ENCODE measurements at regions of chr3 and their contacts with region 1.

Region 1: DNA sequence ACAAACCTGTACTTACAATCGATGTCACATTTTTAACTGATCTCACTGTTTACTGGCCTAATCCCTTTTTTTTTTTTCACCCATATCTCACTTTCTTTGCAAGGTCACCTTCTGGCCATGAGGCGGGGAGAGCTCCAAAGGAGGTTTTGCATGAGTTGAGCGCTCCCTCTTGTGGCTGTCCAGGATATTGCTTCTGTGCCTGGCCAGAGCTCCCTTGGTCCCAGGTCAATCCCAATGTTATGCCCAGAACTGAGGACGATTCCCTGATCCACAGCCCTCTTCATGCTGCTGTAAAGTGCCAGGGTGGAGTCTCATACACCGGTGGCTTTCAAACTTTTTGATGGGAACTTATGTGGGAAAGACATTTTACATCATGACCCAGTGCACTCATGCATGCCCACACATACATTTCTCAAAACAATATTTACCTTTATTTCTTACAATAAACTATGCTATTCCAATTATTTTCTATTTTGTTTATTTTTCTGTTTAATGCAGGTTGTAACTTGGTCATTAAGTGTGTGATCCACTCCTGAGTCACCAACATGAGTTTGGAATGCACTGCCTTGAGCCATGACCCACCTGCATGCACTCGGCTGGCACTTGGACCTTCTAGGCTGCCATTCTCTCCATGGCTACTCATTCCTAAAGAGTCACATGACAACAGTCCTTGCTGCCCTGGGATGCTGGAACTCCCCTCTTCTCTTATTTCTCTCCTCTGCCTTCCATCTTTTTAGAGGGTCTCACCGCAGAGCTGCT is 9.6 kb upstream of the SST start:
- DNase-seq: peak; percentile 71 to 79
- H3K4me3 ChIP-seq: no peak overlapping the region
- H3K27ac ChIP-seq: no peak overlapping the region
- H3K4me1 ChIP-seq: no peaks in the 10 kb centered on the region
- H3K27me3 ChIP-seq: peaks cover 47% of the 10 kb centered on the region
- CTCF ChIP-seq: peak; percentile 96

Region 2: DNA sequence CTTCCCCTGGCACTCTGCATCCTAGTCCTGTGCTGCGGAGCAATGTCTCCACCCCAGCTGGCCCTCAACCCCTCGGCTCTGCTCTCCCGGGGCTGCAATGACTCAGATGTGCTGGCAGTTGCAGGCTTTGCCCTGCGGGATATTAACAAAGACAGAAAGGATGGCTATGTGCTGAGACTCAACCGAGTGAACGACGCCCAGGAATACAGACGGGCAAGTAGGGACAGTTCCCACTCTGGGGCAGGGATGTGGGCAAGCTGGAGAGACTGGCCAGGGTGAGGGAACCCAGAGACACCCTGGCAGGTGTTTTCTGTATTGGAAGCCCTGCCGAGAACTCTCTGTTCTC is 1039.4 kb before region 1 on chr3:
- CTCF ChIA-PET with region 1: no interaction called
- POLR2A ChIA-PET with region 1: no interaction called
- intact Hi-C with region 1: no loop called
- DNase-seq: peak; percentile 67 to 70
- H3K4me3 ChIP-seq: no peak overlapping the region
- H3K27ac ChIP-seq: no peak overlapping the region
- H3K4me1 ChIP-seq: peaks cover 26% of the 10 kb centered on the region
- H3K27me3 ChIP-seq: no peaks in the 10 kb centered on the region
- CTCF ChIP-seq: no peak

Region 3: DNA sequence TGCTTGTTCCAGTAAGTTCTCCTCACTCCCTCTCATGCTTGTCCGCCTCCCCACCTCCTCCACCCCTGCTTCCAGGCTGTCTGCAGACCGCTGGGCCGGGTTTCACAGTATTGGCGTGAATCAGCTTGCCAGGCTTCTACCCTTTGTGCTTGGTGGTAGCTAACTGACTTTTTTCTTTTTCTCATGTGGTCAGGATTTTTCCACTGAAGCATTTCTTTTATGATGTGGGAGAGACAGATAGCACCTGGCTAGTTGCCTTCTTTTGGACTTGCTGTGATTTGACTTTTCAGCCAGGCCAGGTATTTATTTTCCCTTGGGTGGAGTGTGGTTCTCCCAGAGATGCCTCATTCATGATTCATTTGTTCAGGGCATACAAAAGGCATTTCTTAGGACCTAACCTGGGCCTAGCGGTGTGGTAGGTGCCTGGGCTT is 688.9 kb before region 1 on chr3:
- CTCF ChIA-PET with region 1: interaction called, 10 read pairs
- POLR2A ChIA-PET with region 1: no interaction called
- intact Hi-C with region 1: no loop called
- DNase-seq: peak; percentile 79 to 95
- H3K4me3 ChIP-seq: no peak overlapping the region
- H3K27ac ChIP-seq: peak overlapping the region; percentile 73
- H3K4me1 ChIP-seq: peaks cover 31% of the 10 kb centered on the region
- H3K27me3 ChIP-seq: no peaks in the 10 kb centered on the region
- CTCF ChIP-seq: no peak

Region 4: GRCh38 chr3:187139126-187139894 is 540.5 kb before region 1 on chr3 and contains the start of gene RPL39L:
- CTCF ChIA-PET with region 1: interaction called, 10 read pairs
- POLR2A ChIA-PET with region 1: no interaction called
- intact Hi-C with region 1: no loop called
- DNase-seq: peak; percentile 83 to 92
- H3K4me3 ChIP-seq: peak within 1 kb of the TSS; percentile 73
- H3K27ac ChIP-seq: peak within 1 kb of the TSS; percentile 57
- H3K4me1 ChIP-seq: peaks cover 22% of the 10 kb centered on the region
- H3K27me3 ChIP-seq: no peaks in the 10 kb centered on the region
- CTCF ChIP-seq: peak; percentile 99
- total RNA-seq, gene RPL39L: 73.9 and 81.3 TPM in 2 replicates

Region 5: DNA sequence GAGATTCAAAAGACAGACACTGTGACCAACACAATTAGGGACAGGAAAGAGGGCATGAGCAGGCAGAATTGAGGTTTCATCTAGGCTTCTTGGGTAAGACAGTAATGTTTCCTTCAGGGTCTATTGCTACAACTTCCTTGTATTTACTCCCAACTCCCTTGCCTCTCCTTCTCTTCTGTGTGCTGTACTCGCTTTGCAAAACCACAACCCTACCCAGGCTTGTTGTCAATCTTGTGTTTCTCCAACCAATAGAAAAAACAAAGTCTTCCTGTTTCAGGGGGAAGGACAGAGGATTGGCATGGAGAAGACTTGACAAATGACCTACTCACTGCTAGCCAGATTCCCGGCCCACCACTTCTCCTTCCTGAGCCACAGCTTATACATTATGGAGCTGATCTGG is 352.0 kb before region 1 on chr3:
- CTCF ChIA-PET with region 1: interaction called, 3 read pairs
- POLR2A ChIA-PET with region 1: interaction called, 13 read pairs
- intact Hi-C with region 1: no loop called
- DNase-seq: no peak
- H3K4me3 ChIP-seq: no peak overlapping the region
- H3K27ac ChIP-seq: no peak overlapping the region
- H3K4me1 ChIP-seq: no peaks in the 10 kb centered on the region
- H3K27me3 ChIP-seq: peaks cover 79% of the 10 kb centered on the region
- CTCF ChIP-seq: no peak

Region 6: DNA sequence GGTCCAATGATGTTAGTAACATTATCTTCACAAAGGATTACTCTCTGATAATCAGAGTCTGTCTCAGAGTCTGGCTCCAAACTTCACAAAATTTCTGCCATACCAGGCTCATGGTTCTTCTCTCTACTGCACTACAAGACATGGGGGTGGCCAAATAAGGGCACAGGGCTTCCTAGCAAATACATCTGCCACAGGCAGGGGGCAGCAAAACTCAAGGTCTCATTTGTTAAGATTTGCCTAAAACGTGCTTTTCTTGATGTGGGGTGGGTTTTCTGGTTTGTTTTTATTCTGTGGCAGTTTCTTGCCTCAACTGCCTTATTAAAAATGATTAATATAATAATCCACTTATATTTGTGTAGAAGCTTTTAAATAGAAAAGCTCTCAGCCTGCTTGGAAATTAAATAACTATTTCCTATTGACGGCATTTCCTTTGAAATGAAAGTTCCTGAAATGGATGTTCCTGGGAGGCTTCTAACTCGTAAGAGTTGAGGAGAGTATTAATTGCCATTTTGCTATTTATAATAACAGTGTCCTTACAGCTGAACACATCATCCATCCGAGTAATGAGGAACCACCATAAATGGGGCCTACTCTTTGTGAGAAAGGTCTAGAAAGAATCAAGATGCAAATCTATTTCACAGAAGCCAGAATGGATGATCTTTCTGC is 63.4 kb before region 1 on chr3:
- CTCF ChIA-PET with region 1: no interaction called
- POLR2A ChIA-PET with region 1: no interaction called
- intact Hi-C with region 1: loop called (anchors 1 kb)
- DNase-seq: peak in 1 of 2 experiments; percentile 16
- H3K4me3 ChIP-seq: no peak overlapping the region
- H3K27ac ChIP-seq: no peak overlapping the region
- H3K4me1 ChIP-seq: no peaks in the 10 kb centered on the region
- H3K27me3 ChIP-seq: peaks cover 15% of the 10 kb centered on the region; the same call in 1 of the 2 replicates
- CTCF ChIP-seq: peak; percentile 89

Region 7: DNA sequence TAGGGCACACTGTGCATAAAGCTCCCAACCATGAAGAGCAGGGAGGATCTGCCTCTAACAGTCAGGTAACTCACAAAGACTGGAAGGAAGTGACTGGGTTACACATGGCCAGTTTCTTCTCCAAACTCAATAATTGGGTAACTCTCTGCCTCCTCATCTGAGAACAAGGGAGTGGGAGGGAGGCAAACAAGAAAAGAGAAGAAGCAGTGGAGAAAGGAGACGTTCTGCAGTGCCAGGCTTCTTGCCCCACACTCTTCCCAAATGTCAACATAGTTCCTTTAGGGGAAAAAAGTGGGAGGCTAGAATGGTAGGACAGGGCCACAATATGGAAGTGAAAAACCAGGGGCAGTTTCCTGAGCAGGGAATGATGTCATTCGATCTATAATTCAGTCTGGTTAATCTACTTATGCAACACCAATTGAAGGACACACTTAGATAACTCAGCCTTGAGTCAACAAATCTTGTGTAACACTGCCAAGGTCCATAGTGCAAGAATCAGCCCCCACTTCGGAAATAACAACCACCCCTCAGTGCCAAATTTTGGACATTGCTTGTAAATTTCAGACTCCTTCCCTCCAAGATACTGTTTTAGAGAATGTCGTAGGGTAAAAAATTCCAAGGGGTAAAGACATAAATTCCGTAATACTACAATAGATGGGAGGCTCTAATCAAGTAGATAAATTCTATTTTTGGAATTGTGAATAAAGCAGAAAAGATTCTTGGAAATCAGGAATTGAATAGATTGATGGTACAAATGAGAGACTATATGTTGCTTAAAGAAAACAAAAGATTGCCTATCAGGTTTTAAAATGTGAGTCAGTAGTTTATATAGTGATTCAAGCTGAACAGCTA is 617.2 kb after region 1 on chr3:
- CTCF ChIA-PET with region 1: no interaction called
- POLR2A ChIA-PET with region 1: no interaction called
- intact Hi-C with region 1: no loop called
- DNase-seq: peak in 1 of 2 experiments; percentile 89
- H3K4me3 ChIP-seq: peak overlapping the region; percentile 2; the same call in 1 of the 2 replicates
- H3K27ac ChIP-seq: peak overlapping the region; percentile 77
- H3K4me1 ChIP-seq: peaks cover 55% of the 10 kb centered on the region
- H3K27me3 ChIP-seq: no peaks in the 10 kb centered on the region
- CTCF ChIP-seq: no peak